ENCODE measurements at regions of chrX and their contacts with region 1.

Region 1: GRCh38 chrX:64805683-64806082 is 170.6 kb downstream of the ZC4H2 start:
- DNase-seq: no peak
- ATAC-seq: no peak

Region 2: GRCh38 chrX:64850371-64851082 is 44.8 kb after region 1 on chrX:
- intact Hi-C with region 1: loop called (anchors 2 kb)
- DNase-seq: no peak
- ATAC-seq: no peak

Region 3: DNA sequence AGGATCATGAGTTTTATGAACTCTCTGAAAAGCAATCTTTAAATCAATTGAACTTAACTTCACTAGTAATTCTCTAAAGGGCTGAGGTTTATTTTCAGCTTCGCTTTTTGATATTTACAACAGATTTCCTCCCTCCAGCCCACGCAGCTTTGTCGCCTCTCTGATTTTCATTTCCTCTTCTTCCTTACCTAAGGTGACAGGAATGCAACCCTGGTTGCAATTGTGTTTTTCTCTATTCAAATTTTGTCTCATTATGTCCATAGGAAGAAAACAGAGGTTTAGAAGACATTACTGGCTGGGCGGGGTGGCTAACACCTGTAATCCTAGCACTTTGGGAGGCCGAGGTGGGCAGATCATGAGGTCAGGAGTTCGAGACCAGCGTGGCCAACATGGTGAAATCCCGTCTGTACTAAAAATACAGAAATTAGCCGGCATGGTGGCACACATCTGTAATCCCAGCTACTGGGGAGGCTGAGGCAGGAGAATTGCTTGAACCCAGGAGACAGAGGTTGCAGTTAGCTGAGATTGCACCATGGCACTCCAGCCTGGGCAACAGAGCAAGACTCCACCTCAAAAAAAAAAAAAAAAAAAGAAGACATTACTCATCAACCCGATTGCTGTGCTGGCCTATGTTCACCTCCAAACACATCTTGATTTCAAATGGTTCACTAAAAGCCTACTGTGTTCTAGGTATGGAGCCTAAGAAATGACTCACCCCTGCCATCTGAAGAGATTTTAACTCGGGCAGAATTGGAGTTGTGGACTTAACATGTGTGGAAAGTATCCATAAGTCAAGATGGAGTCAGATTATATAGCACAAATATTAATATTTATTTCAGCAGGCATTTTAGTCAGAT is 1197.4 kb after region 1 on chrX:
- intact Hi-C with region 1: no loop called
- DNase-seq: no peak
- ATAC-seq: no peak

Region 4: GRCh38 chrX:66098162-66098561 is 1292.5 kb after region 1 on chrX:
- intact Hi-C with region 1: no loop called
- DNase-seq: no peak
- ATAC-seq: no peak